GM10248 (cell line): ENCODE measurements at regions of chr14 and their contacts with region 1.

Region 1: GRCh38 chr14:103808403-103809001 is 38.9 kb downstream of the PPP1R13B start:
- DNase-seq: peak; percentile 62
- CTCF ChIP-seq: peak; percentile 78

Region 2: GRCh38 chr14:103788086-103788485 is 20.4 kb before region 1 on chr14:
- CTCF ChIA-PET with region 1: interaction called, 22 read pairs
- POLR2A ChIA-PET with region 1: no interaction called
- DNase-seq: no peak
- CTCF ChIP-seq: no peak

Region 3: GRCh38 chr14:103825101-103825500 is 16.6 kb after region 1 on chr14:
- CTCF ChIA-PET with region 1: interaction called, 41 read pairs
- POLR2A ChIA-PET with region 1: interaction called, 3 read pairs
- DNase-seq: no peak
- CTCF ChIP-seq: no peak

Region 4: GRCh38 chr14:103910262-103910935 is 101.9 kb after region 1 on chr14:
- CTCF ChIA-PET with region 1: interaction called, 74 read pairs
- POLR2A ChIA-PET with region 1: no interaction called
- DNase-seq: peak; percentile 82
- CTCF ChIP-seq: peak; percentile 82